Activated T-helper 2 cell treated with anti-CD3 and anti-CD28 coated beads, Interferon-gamma antibody, Interleukin-2, Interleukin-4, amounts not matched to agents 10 μg/mL and 5 μg/mL and 100 μg/mL, durations not matched to agents 14 hours and 24 hours and 36 hours (primary cell): ENCODE measurements at regions of chr1 and their contacts with region 1.

Region 1: GRCh38 chr1:159214149-159214760 is 9.6 kb downstream of the ACKR1 start:
- DNase-seq: no peak
- H3K4me3 Mint-ChIP-seq: no peak overlapping the region
- H3K27ac Mint-ChIP-seq: no peak overlapping the region
- H3K4me1 Mint-ChIP-seq: peaks cover 1% of the 10 kb centered on the region
- H3K27me3 Mint-ChIP-seq: peaks cover 11% of the 10 kb centered on the region

Region 2: DNA sequence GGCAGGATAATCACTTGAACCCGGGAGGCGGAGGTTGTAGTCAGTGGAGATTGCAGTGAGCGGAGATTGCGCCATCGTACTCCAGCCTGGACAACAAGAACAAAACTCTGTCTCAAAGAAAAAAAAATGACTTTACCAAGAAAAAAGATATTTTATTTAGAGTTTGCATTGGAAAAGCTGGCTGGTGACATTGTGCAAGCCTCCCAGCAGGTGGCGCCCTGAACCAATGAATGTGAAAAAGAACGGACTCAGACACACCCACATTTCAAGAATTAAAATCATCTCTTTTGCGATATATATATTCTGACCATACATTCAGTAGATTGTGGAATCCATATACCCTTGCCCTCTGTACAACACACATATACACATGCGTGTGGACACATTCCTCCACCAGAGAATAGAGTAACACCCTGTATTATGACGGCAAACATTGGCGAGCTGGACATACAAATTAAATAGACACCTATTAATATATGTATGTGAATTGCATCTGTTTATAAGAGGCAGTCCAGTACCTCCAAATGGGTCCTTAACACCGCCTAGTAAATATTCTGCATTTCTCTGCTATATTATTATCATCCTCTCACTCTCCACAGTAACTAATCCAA is 81.9 kb before region 1 on chr1:
- intact Hi-C with region 1: loop called (anchors 5 kb)
- DNase-seq: peak; percentile 35
- H3K4me3 Mint-ChIP-seq: no peak overlapping the region
- H3K27ac Mint-ChIP-seq: no peak overlapping the region
- H3K4me1 Mint-ChIP-seq: no peaks in the 10 kb centered on the region
- H3K27me3 Mint-ChIP-seq: no peaks in the 10 kb centered on the region

Region 3: DNA sequence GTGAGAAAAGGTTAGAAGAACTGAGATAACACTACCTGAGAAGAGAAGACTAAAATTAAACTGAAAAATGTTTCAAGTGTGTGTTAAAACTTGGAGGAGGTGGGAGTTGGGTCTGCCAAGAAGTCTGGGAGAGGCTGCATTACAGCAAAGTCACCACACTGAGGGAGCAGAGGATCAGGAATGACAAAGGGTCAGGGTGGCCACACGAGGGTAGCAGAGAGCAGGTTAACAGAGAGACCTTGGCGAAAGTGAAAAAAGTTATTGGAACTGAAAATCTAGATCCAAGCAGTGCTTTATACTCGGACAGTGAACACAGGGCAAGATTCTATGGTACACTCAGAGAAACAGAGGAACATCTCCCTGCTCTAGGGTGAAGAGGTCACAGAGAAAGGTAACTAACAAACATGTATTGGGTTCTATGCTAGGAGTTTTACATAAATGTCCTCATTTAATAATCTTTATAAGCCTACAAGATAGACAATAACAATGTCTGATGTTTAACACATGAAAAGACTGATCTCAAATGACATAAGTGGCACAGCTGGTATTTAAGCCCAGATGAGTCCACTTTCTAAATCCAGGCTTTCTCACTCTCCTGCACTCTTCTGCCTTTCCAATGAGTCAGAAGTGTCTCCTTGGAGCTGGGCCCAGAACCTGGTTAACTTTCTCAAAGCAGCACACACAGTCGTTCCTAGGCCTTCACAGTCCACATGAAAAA is 53.1 kb before region 1 on chr1:
- intact Hi-C with region 1: loop called (anchors 1 kb)
- DNase-seq: peak; percentile 45
- H3K4me3 Mint-ChIP-seq: no peak overlapping the region
- H3K27ac Mint-ChIP-seq: no peak overlapping the region
- H3K4me1 Mint-ChIP-seq: peaks cover 2% of the 10 kb centered on the region
- H3K27me3 Mint-ChIP-seq: peaks cover 24% of the 10 kb centered on the region

Region 4: GRCh38 chr1:159266832-159267231 is 52.6 kb after region 1 on chr1:
- intact Hi-C with region 1: no loop called
- DNase-seq: no peak
- H3K4me3 Mint-ChIP-seq: no peak overlapping the region
- H3K27ac Mint-ChIP-seq: no peak overlapping the region
- H3K4me1 Mint-ChIP-seq: peaks cover 3% of the 10 kb centered on the region
- H3K27me3 Mint-ChIP-seq: no peaks in the 10 kb centered on the region

Region 5: GRCh38 chr1:159282118-159282517 is 67.9 kb after region 1 on chr1:
- intact Hi-C with region 1: no loop called
- DNase-seq: no peak
- H3K4me3 Mint-ChIP-seq: no peak overlapping the region
- H3K27ac Mint-ChIP-seq: no peak overlapping the region
- H3K4me1 Mint-ChIP-seq: no peaks in the 10 kb centered on the region
- H3K27me3 Mint-ChIP-seq: no peaks in the 10 kb centered on the region